ENCODE measurements at regions of chr11 and their contacts with region 1.

Region 1: DNA sequence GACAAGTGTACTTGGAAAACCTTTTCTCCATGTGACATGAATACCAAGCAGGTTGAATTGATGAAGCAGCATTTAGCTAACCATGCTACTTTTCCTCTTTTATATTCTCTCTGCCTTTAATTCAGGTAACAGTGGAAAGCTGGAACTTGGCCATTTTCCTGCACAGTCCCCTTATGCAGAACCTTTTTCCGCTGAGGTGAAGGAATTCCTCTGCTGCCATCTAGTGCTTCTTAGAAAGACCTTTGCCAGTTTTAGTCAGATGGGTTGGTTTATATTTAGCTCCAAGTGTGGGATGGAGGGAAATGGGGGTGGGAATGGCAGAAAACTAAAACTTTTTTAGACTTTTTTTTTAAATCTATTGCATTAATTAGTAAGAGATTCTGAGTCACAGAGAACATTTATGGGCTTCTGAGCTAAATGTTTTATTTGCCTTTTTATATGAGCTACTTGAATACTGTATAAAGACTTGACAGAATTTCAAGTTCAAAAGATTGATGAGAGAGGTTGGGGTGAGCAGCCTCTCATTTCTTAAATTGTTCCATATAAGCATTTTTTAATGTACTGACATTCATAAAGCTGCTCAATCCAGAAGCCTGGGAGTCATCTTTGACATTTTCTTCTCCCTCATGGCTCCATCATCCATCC is 153.9 kb upstream of the ZC3H12C start:
- DNase-seq: peak; percentile 43 to 71 (median 63)
- H3K4me3 ChIP-seq: no peak overlapping the region
- H3K27ac ChIP-seq: no peak overlapping the region
- H3K4me1 ChIP-seq: no peaks in the 10 kb centered on the region
- H3K27me3 ChIP-seq: no peaks in the 10 kb centered on the region
- CTCF ChIP-seq: peak; percentile 48 to 78 (median 68)
- POLR2A ChIP-seq: no peak

Region 2: GRCh38 chr11:108697872-108698473 is 1241.3 kb before region 1 on chr11:
- intact Hi-C with region 1: loop called in 1 of 2 experiments (anchors 10 kb)
- DNase-seq: peak; percentile 55 to 83 (median 61)
- H3K4me3 ChIP-seq: no peak overlapping the region
- H3K27ac ChIP-seq: no peak overlapping the region
- H3K4me1 ChIP-seq: peaks cover 0 to 12% of the 10 kb centered on the region in 2 donors
- H3K27me3 ChIP-seq: no peaks in the 10 kb centered on the region
- CTCF ChIP-seq: peak; percentile 84 to 97 (median 94)
- POLR2A ChIP-seq: no peak

Region 3: GRCh38 chr11:109644152-109644551 is 295.1 kb before region 1 on chr11:
- intact Hi-C with region 1: no loop called
- DNase-seq: peak in 6 of 7 donors; percentile 15 to 90 (median 22)
- H3K4me3 ChIP-seq: no peak overlapping the region
- H3K27ac ChIP-seq: no peak overlapping the region
- H3K4me1 ChIP-seq: no peaks in the 10 kb centered on the region
- H3K27me3 ChIP-seq: no peaks in the 10 kb centered on the region
- CTCF ChIP-seq: no peak
- POLR2A ChIP-seq: no peak

Region 4: GRCh38 chr11:109864834-109865547 is 74.3 kb before region 1 on chr11:
- intact Hi-C with region 1: loop called in 1 of 2 experiments (anchors 5 kb)
- DNase-seq: no peak
- H3K4me3 ChIP-seq: no peak overlapping the region
- H3K27ac ChIP-seq: no peak overlapping the region
- H3K4me1 ChIP-seq: peaks cover 0 to 31% of the 10 kb centered on the region in 2 donors
- H3K27me3 ChIP-seq: no peaks in the 10 kb centered on the region
- CTCF ChIP-seq: no peak
- POLR2A ChIP-seq: no peak

Measured in adrenal gland (tissue), 19 donors.